ENCODE measurements at regions of chr22 and their contacts with region 1.

Region 1: GRCh38 chr22:36470162-36470993 is 11.1 kb downstream of the TXN2 start:
- DNase-seq: peak; percentile 65 to 83
- H3K4me3 ChIP-seq: no peak overlapping the region
- H3K27ac ChIP-seq: peak overlapping the region; percentile 30; the same call in 1 of the 2 replicates
- H3K4me1 ChIP-seq: peaks cover 0 to 2% (median 0%) of the 10 kb centered on the region in 4 experiments; a peak in 2 of 7 replicates
- H3K27me3 ChIP-seq: no peaks in the 10 kb centered on the region
- CTCF ChIP-seq: peak; percentile 85 to 96 (median 95)
- EP300 ChIP-seq: no peak
- POLR2A ChIP-seq: 0 out of 3 replicates have a peak, but pooled peaks of 1 of the 2 experiments have one; percentile 28
- RAD21 ChIP-seq: peak; percentile 98 to 99

Region 2: GRCh38 chr22:36311386-36312358 is 158.7 kb before region 1 on chr22:
- CTCF ChIA-PET with region 1: interaction called, 25 read pairs
- POLR2A ChIA-PET with region 1: interaction called, 3 read pairs
- DNase-seq: no peak
- H3K4me3 ChIP-seq: no peak overlapping the region
- H3K27ac ChIP-seq: no peak overlapping the region
- H3K4me1 ChIP-seq: no peaks in the 10 kb centered on the region
- H3K27me3 ChIP-seq: no peaks in the 10 kb centered on the region
- CTCF ChIP-seq: no peak
- EP300 ChIP-seq: no peak
- POLR2A ChIP-seq: no peak
- RAD21 ChIP-seq: no peak

Region 3: GRCh38 chr22:36325154-36326031 is 145.0 kb before region 1 on chr22:
- CTCF ChIA-PET with region 1: interaction called, 15 read pairs
- POLR2A ChIA-PET with region 1: interaction called, 14 read pairs
- DNase-seq: no peak
- H3K4me3 ChIP-seq: no peak overlapping the region
- H3K27ac ChIP-seq: no peak overlapping the region
- H3K4me1 ChIP-seq: peaks cover 9 to 21% (median 17%) of the 10 kb centered on the region in 4 experiments
- H3K27me3 ChIP-seq: no peaks in the 10 kb centered on the region
- CTCF ChIP-seq: no peak
- EP300 ChIP-seq: no peak
- POLR2A ChIP-seq: no peak
- RAD21 ChIP-seq: no peak

Region 4: DNA sequence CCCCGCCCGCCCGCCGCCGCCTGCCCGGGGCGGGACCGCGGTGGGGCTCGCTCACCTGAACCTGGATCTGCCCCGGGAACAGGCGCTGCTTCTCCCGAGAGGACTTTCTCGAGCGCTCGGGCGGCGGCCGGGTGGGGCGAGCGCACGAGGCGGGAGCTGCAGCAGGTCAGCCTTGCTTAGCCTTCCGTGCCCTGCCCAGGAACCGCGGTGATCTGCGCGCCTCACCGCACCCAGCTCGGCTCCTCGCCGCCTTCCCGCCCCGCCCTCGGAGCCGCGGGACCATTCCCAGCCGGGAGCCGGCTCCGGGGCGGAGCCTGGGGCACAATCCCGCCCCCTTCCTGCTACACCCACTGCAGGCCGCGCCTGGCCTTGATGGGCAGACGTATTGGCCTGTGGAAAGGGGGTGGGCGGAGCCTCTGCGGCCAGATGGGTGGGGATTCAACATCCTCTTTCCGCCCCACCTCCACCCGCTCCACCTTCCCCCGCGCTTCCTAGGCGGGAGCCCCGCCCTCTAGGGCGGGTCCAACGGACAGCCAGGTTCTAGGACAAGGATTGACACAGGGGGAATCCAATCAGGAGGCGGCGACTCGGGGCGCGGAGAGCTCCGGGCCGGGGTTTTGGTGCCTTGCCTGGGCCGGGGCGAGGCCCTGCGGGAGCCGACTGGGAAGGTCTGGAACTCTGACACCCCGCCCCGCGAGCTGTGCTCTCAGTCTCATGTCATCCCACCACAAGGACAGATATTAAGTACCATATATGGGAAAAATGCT is 82.4 kb before region 1 on chr22 and contains the start of gene MYH9:
- CTCF ChIA-PET with region 1: interaction called, 7 read pairs
- POLR2A ChIA-PET with region 1: interaction called, 12 read pairs
- DNase-seq: peak; percentile 99 to 100
- H3K4me3 ChIP-seq: peak within 1 kb of the TSS; percentile 52 to 98 (median 86)
- H3K27ac ChIP-seq: peak within 1 kb of the TSS; percentile 79; the same call in 1 of the 2 replicates
- H3K4me1 ChIP-seq: peaks cover 0 to 16% (median 5%) of the 10 kb centered on the region in 4 experiments; a peak in 6 of 7 replicates
- H3K27me3 ChIP-seq: no peaks in the 10 kb centered on the region
- CTCF ChIP-seq: no peak
- EP300 ChIP-seq: no peak
- POLR2A ChIP-seq: peak; percentile 94 to 95
- RAD21 ChIP-seq: no peak
- total RNA-seq, gene MYH9: 295 and 322 TPM in 2 replicates

Region 5: GRCh38 chr22:36481393-36482168 is 11.2 kb after region 1 on chr22 and contains the start of gene TXN2:
- CTCF ChIA-PET with region 1: interaction called, 13 read pairs
- POLR2A ChIA-PET with region 1: interaction called, 12 read pairs
- DNase-seq: peak; percentile 77 to 92
- H3K4me3 ChIP-seq: peak within 1 kb of the TSS; percentile 58 to 97 (median 71)
- H3K27ac ChIP-seq: peak within 1 kb of the TSS; percentile 60
- H3K4me1 ChIP-seq: peaks cover 0 to 5% (median 2%) of the 10 kb centered on the region in 4 experiments; a peak in 4 of 7 replicates
- H3K27me3 ChIP-seq: peaks cover 0 to 7% (median 5%) of the 10 kb centered on the region in 4 experiments; a peak in 5 of 7 replicates
- CTCF ChIP-seq: no peak
- EP300 ChIP-seq: no peak
- POLR2A ChIP-seq: peak; percentile 81 to 91
- RAD21 ChIP-seq: no peak
- total RNA-seq, gene TXN2: 47.5 and 53.8 TPM in 2 replicates

Region 6: GRCh38 chr22:36644333-36644757 is 174.0 kb after region 1 on chr22:
- CTCF ChIA-PET with region 1: no interaction called
- POLR2A ChIA-PET with region 1: no interaction called
- DNase-seq: peak in 1 of 2 experiments; percentile 65
- H3K4me3 ChIP-seq: no peak overlapping the region
- H3K27ac ChIP-seq: no peak overlapping the region
- H3K4me1 ChIP-seq: no peaks in the 10 kb centered on the region
- H3K27me3 ChIP-seq: peaks cover 0 to 6% (median 1%) of the 10 kb centered on the region in 4 experiments; a peak in 3 of 7 replicates
- CTCF ChIP-seq: no peak
- EP300 ChIP-seq: no peak
- POLR2A ChIP-seq: no peak
- RAD21 ChIP-seq: no peak; a peak in 1 of 4 replicates

Region 7: DNA sequence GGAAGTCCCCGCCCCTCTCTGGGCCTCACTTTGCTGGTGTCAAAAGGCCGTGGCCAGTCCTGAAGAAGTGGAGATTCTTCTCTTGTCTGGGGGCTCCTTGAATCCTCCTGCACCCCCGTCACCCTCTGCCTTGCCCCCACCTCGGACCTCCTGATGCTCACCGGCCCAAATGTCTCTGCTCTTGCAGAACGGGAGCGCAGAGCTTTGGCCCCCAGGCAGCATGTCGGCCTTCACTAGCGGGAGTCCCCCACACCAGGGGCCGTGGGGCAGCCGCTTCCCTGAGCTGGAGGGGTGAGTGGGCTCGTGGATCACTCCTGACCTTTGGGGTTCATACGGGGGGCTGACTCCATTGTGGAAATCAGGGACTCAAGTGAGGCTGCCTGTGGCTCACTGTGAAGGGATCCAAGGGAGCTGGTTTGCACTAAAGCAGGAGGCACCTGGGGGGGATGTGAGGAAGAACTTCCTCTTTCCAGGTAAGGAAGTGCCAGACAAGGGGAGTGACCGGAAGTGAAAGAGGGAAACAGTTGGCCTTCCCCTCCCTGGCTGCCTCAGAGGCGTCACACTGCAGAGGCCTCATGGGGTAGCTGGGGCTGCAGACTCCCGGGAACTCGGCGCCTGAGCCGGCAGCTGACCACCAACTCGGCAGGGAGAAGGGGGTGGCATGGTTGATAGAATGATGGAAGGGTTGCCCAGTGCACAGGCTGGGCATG is 466.1 kb after region 1 on chr22:
- CTCF ChIA-PET with region 1: no interaction called
- POLR2A ChIA-PET with region 1: no interaction called
- DNase-seq: peak in 1 of 2 experiments; percentile 37
- H3K4me3 ChIP-seq: no peak overlapping the region
- H3K27ac ChIP-seq: no peak overlapping the region
- H3K4me1 ChIP-seq: 0 out of 7 replicates have a peak, but pooled peaks cover 0 to 2% (median 0%) of the 10 kb centered on the region in 4 experiments
- H3K27me3 ChIP-seq: no peaks in the 10 kb centered on the region; a peak in 1 of 7 replicates
- CTCF ChIP-seq: no peak
- EP300 ChIP-seq: no peak
- POLR2A ChIP-seq: no peak
- RAD21 ChIP-seq: no peak

Measured in H1 (cell line).